HEK293 (cell line): ENCODE measurements at regions of chr19 and their contacts with region 1.

Region 1: DNA sequence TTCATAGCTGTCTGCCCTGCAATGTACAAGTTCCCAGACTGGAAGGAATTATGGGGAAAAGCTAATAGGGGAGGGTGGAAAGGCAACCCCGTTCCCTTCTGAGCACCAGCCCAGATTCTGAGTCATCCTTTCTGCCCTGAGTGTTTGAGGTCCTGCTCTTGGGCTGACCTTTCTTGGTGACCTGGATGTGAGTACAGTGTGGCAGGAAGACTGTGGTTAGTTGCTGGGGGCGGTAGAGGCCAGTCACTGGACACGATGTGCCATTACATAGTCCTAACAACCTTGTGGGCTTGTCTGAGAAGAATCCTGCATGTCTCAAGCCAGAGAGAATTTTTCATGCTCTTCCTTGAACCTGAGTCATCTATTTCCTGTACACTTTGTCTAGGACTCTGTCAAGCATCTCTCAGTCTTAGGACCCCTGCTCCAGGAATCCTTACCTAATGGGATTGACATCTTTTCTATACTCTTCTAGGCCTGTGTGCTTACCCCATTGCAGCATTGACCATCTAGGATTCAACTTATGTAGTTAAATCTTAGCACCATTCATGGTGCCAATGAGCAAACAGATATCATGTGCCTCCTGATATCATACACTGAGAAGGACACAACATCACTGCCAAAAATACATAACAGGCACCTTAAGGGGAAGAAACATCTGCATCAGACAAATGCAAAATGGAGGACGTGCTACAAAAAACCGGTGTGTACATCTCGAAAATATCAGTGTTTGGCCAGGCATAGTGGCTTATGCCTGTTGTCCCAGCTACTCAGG is 8.1 kb upstream of the ANGPTL4 start:
- H3K4me3 ChIP-seq: no peak overlapping the region
- H3K27ac ChIP-seq: no peak overlapping the region
- H3K4me1 ChIP-seq: no peaks in the 10 kb centered on the region
- CTCF ChIP-seq: no peak

Region 2: GRCh38 chr19:8367327-8368001 is 11.6 kb after region 1 on chr19:
- CTCF ChIA-PET with region 1: interaction called, 35 read pairs
- POLR2A ChIA-PET with region 1: interaction called, 6 read pairs
- H3K4me3 ChIP-seq: peak overlapping the region; percentile 28
- H3K27ac ChIP-seq: no peak overlapping the region
- H3K4me1 ChIP-seq: peaks cover 20% of the 10 kb centered on the region
- CTCF ChIP-seq: no peak

Region 3: DNA sequence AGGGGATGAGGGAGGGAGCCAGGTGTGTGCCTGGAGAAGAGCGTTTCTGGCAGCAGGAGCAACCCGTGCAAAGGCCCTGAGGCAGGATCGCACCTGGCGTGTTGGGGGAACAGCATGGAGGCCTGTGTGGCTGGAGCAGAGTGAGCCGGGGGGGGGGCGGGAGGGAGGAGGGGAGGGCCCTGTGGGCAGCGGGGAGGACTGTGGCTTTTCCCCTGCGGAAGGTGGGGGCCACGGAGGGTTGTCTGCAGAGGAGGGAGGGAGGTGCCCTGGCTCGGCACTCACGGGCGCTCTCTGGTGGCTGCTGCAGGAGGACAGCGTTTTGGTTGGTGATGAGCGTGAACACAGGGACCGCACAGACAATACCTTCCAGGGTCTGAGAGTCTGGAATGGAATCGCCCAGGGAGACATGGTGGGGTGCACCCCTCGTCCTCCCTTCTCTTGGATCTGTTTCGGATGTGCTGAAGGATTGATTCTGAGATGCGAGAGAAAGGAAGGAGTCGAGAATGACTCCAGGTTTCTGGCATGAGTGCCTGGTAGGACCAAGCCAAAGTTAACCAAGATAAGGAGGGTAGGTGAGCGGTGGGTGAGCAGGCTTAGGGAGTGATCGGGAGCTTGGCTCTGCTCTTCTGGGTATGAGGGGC is 40.9 kb after region 1 on chr19:
- CTCF ChIA-PET with region 1: interaction called, 87 read pairs
- POLR2A ChIA-PET with region 1: interaction called, 3 read pairs
- H3K4me3 ChIP-seq: no peak overlapping the region
- H3K27ac ChIP-seq: no peak overlapping the region
- H3K4me1 ChIP-seq: no peaks in the 10 kb centered on the region
- CTCF ChIP-seq: peak; percentile 86

Region 4: GRCh38 chr19:8412783-8413628 is 57.2 kb after region 1 on chr19 and contains the start of gene MARCHF2:
- CTCF ChIA-PET with region 1: interaction called, 17 read pairs
- POLR2A ChIA-PET with region 1: interaction called, 6 read pairs
- H3K4me3 ChIP-seq: peak within 1 kb of the TSS; percentile 62
- H3K27ac ChIP-seq: no peak within 1 kb of the TSS; the same call in 1 of the 2 replicates
- H3K4me1 ChIP-seq: peaks cover 2% of the 10 kb centered on the region; the same call in 1 of the 2 replicates
- CTCF ChIP-seq: peak; percentile 42

Region 5: GRCh38 chr19:8444645-8445487 is 89.0 kb after region 1 on chr19 and contains the start of gene HNRNPM:
- CTCF ChIA-PET with region 1: interaction called, 11 read pairs
- POLR2A ChIA-PET with region 1: interaction called, 4 read pairs
- H3K4me3 ChIP-seq: peak within 1 kb of the TSS; percentile 95
- H3K27ac ChIP-seq: peak within 1 kb of the TSS; percentile 88
- H3K4me1 ChIP-seq: peaks cover 12% of the 10 kb centered on the region
- CTCF ChIP-seq: no peak

Region 6: DNA sequence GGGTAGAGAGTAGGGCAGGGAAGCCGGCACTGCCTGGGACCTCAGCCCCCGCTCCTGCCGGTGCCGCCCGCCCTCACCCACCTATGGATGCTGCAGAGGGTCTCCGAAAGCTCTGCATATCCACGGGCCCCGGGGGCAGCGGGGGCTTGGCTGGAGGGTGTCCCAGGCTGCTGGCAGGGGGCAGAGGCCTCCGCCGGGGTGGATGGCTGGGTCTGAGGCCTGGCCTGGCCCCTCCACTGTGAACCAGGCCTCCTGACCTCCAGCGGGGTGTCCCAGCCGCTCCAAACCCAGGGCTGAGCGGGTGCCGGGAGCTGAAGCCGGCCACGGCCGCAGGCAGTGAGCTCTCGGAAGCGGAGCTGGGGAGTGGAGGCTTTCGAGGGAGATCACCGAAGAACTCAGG is 142.5 kb after region 1 on chr19:
- CTCF ChIA-PET with region 1: no interaction called
- POLR2A ChIA-PET with region 1: no interaction called
- H3K4me3 ChIP-seq: no peak overlapping the region
- H3K27ac ChIP-seq: no peak overlapping the region
- H3K4me1 ChIP-seq: no peaks in the 10 kb centered on the region
- CTCF ChIP-seq: no peak

Region 7: DNA sequence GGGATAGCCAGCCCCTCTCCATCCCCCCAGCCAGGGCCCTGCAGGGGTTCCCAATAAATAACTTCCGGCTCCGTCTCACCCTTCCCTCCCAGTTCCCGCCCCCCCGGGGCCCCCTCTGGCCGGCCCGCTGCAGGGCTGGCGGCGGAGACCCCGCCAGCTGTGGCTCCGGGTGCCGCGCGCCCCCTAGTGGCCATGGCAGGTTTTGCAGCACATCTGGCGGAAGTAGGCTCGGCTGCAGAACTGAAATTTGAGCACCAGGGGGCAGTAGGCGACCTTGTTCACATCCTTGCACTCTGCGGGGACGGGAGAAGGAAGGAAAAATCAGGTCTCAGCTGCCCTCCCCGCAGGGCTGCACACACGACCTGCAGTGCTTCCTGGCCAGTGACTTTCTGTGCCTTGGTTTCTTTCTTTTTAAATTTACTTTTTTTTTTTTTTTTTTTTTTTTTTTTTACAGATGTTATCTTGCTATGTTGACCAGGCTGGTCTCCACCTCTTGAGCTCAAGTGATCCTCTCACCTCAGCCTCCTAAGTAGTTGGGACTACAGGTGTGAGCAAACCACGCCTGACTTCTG is 225.0 kb after region 1 on chr19:
- CTCF ChIA-PET with region 1: interaction called, 36 read pairs
- POLR2A ChIA-PET with region 1: no interaction called
- H3K4me3 ChIP-seq: no peak overlapping the region
- H3K27ac ChIP-seq: no peak overlapping the region
- H3K4me1 ChIP-seq: no peaks in the 10 kb centered on the region
- CTCF ChIP-seq: peak; percentile 96

Region 8: GRCh38 chr19:8663920-8664670 is 308.3 kb after region 1 on chr19:
- CTCF ChIA-PET with region 1: no interaction called
- POLR2A ChIA-PET with region 1: no interaction called
- H3K4me3 ChIP-seq: no peak overlapping the region
- H3K27ac ChIP-seq: no peak overlapping the region
- H3K4me1 ChIP-seq: no peaks in the 10 kb centered on the region
- CTCF ChIP-seq: no peak